T-cell (primary cell): ENCODE measurements at regions of chr1 and their contacts with region 1.

Region 1: GRCh38 chr1:184037849-184038591 is 492 bp upstream of the COLGALT2 start:
- DNase-seq: no peak
- ATAC-seq: no peak
- H3K4me3 ChIP-seq: peak overlapping the region; percentile 45 to 78
- H3K4me3 Mint-ChIP-seq: peak overlapping the region; percentile 52 to 67 (median 58)
- H3K27ac ChIP-seq: no peak overlapping the region
- H3K27ac Mint-ChIP-seq: no peak overlapping the region
- H3K4me1 ChIP-seq: peaks cover 7 to 18% of the 10 kb centered on the region in 2 experiments
- H3K4me1 Mint-ChIP-seq: peaks cover 15 to 26% (median 19%) of the 10 kb centered on the region in 3 donors
- H3K27me3 ChIP-seq: peaks cover 17 to 24% of the 10 kb centered on the region in 2 experiments
- H3K27me3 Mint-ChIP-seq: peaks cover 58 to 61% of the 10 kb centered on the region in 2 donors

Region 2: GRCh38 chr1:184051485-184052193 is 13.6 kb after region 1 on chr1 and contains the start of gene TSEN15:
- CTCF ChIA-PET with region 1: no interaction called
- POLR2A ChIA-PET with region 1: interaction called in 1 of 2 experiments, 10 read pairs
- DNase-seq: peak; percentile 55 to 83 (median 66)
- ATAC-seq: peak; percentile 97 to 98 (median 98)
- H3K4me3 ChIP-seq: peak within 1 kb of the TSS; percentile 71 to 99
- H3K4me3 Mint-ChIP-seq: peak within 1 kb of the TSS; percentile 96 to 99 (median 99)
- H3K27ac ChIP-seq: peak within 1 kb of the TSS; percentile 75
- H3K27ac Mint-ChIP-seq: peak within 1 kb of the TSS; percentile 99
- H3K4me1 ChIP-seq: peaks cover 12 to 15% of the 10 kb centered on the region in 2 experiments
- H3K4me1 Mint-ChIP-seq: peaks cover 38 to 44% (median 43%) of the 10 kb centered on the region in 3 donors
- H3K27me3 ChIP-seq: no peaks in the 10 kb centered on the region
- H3K27me3 Mint-ChIP-seq: peaks cover 10 to 16% of the 10 kb centered on the region in 2 donors
- total RNA-seq, gene TSEN15: 22.1 to 39.8 (median 35.4) TPM